ENCODE measurements at regions of chr10 and their contacts with region 1.

Region 1: DNA sequence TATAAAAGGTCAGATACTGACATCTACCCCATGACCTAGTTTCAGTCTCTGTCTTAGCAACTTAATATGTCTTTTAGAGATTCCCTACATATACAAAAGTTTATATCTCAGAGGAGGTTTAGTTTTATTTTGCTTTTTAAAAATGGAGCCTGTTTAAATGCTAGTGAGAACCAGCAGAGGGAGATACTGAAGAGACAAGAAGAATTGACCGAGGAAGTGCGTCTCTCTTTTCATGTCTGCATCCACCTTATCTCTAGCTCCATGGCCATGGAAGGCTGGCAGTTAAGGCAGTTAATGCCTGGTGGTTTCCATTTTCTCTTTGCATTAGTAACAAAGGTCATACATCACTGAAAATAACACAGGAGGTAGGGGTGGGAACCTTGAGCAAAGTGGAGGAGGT is 10.7 kb downstream of the SUV39H2 start:
- DNase-seq: no peak
- H3K4me3 ChIP-seq: no peak overlapping the region
- H3K27ac ChIP-seq: no peak overlapping the region
- H3K4me1 ChIP-seq: no peaks in the 10 kb centered on the region
- H3K27me3 ChIP-seq: no peaks in the 10 kb centered on the region
- CTCF ChIP-seq: no peak

Region 2: DNA sequence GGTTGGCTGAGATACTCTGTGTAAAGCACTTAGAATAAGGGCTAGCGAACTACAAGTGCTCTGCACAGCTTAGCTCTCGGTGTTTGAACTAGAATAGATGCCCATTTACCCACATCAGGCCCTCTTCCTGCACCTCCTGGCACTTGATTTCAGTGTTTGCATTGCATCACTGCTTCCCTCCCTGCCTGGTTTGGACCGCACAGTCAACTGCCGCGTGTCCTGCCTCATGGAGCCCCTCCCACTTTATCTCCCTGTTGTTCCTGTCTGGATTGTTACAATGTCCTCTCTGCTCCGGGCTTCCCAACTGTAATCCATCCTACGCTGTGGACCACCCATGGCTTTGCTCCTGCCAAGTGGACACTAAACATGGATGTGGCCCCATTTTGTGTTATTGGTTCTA is 116.9 kb before region 1 on chr10:
- intact Hi-C with region 1: no loop called
- DNase-seq: no peak
- H3K4me3 ChIP-seq: no peak overlapping the region
- H3K27ac ChIP-seq: no peak overlapping the region
- H3K4me1 ChIP-seq: no peaks in the 10 kb centered on the region
- H3K27me3 ChIP-seq: no peaks in the 10 kb centered on the region
- CTCF ChIP-seq: no peak

Region 3: DNA sequence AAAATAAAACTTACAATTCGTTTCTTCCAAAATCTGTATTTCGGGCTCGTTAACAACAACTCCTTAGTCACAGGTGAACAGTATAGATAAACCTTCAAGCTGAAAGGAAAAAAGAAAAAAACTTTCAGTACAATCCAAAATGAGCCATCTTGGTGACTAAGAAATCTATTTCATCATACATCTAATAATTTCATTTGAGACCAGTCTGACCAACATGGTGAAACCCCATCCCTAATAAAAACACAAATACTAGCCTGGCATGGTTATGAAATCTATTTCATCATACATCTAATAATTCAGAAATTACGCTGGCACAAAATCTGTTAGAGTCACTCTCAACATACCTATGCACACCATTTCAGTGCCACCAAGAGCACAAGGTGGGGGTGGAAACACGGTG is 55.8 kb after region 1 on chr10:
- intact Hi-C with region 1: loop called (anchors 5 kb)
- DNase-seq: no peak
- H3K4me3 ChIP-seq: no peak overlapping the region
- H3K27ac ChIP-seq: no peak overlapping the region
- H3K4me1 ChIP-seq: no peaks in the 10 kb centered on the region
- H3K27me3 ChIP-seq: no peaks in the 10 kb centered on the region
- CTCF ChIP-seq: no peak